GM10248 (cell line): ENCODE measurements at regions of chr17 and their contacts with region 1.

Region 1: DNA sequence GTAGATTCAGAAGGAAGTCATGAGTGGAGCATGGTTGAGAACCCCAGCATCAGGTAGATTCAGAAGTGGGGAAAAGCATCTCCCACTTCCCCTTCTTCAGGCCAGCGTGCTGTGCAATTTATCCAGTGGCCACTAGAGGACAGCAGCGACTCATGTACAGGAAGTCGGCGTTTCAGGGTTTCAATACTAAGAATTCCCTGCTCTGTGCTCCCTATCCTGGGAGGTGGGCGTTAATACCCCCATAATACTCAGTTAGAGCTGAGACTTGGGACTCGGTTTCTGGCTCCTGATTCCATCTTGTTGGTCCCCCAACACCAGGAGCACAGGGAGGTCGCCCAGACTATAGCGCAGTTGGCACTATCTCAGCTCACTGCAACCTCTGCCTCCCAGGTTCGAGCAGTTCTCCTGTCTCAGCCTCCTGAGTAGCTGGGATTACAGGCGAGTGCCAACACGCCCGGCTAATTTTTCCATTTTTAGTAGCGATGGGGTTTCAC is 75.3 kb upstream of the AMZ2 start:
- DNase-seq: peak; percentile 34
- CTCF ChIP-seq: peak; percentile 96

Region 2: GRCh38 chr17:68184816-68185436 is 12.4 kb after region 1 on chr17:
- CTCF ChIA-PET with region 1: interaction called, 35 read pairs
- POLR2A ChIA-PET with region 1: no interaction called
- DNase-seq: peak; percentile 76
- CTCF ChIP-seq: no peak

Region 3: GRCh38 chr17:68205251-68205807 is 32.8 kb after region 1 on chr17:
- CTCF ChIA-PET with region 1: interaction called, 50 read pairs
- POLR2A ChIA-PET with region 1: interaction called, 3 read pairs
- DNase-seq: peak; percentile 91
- CTCF ChIP-seq: peak; percentile 94

Region 4: GRCh38 chr17:68277807-68278206 is 105.3 kb after region 1 on chr17:
- CTCF ChIA-PET with region 1: no interaction called
- POLR2A ChIA-PET with region 1: no interaction called
- DNase-seq: no peak
- CTCF ChIP-seq: no peak

Region 5: GRCh38 chr17:68398691-68399637 is 226.5 kb after region 1 on chr17:
- CTCF ChIA-PET with region 1: interaction called, 14 read pairs
- POLR2A ChIA-PET with region 1: no interaction called
- DNase-seq: peak; percentile 88
- CTCF ChIP-seq: peak; percentile 74

Region 6: GRCh38 chr17:68457539-68458259 is 285.2 kb after region 1 on chr17:
- CTCF ChIA-PET with region 1: interaction called, 24 read pairs
- POLR2A ChIA-PET with region 1: interaction called, 4 read pairs
- DNase-seq: peak; percentile 98
- CTCF ChIP-seq: no peak